Activated B cell treated with CpG ODN at 0.5 μM for 24 hours (primary cell): ENCODE measurements at regions of chr4 and their contacts with region 1.

Region 1: DNA sequence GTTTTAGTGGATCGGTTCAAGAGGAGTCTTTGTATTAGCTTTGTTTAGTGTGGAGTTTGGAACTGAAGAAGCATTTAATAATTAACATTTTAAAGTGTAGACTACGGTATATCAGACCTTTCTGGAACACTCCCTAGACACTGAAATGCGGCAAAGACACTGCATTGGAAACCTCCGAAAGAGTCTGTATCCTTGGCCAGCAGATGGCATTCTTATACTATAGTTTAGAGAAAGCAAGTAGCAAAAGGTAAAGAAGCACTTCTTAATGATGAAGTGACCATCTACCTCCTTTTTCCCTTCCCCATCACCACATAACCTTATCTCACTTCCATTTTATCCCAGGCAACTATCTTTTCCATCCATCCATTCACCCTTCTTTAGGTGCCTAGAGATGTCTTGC is 7.6 kb downstream of the FABP2 start:
- DNase-seq: no peak
- ATAC-seq: peak; percentile 57
- H3K4me3 Mint-ChIP-seq: no peak overlapping the region
- H3K27ac Mint-ChIP-seq: no peak overlapping the region
- H3K4me1 Mint-ChIP-seq: no peaks in the 10 kb centered on the region
- H3K27me3 Mint-ChIP-seq: peaks cover 8% of the 10 kb centered on the region
- CTCF ChIP-seq: no peak

Region 2: DNA sequence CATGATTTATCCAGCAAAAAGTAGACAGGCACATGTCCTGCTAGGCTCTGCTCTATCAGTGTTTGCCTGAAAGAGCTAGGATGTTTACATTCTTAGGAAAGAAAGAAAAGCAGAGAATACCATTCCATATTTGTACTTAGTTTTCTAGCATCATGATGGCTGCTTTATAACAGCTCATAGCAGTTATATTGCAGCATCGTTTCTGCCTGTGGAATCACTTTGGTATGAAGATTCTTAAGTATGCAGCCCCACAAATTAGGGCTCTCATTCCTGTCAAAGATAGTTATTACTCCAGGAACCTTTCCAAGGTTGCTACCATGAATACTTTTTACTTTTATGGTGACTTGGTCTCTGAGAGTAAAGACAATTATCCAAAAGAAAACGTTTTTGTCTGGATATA is 297.7 kb before region 1 on chr4:
- CTCF ChIA-PET with region 1: no interaction called
- POLR2A ChIA-PET with region 1: no interaction called
- intact Hi-C with region 1: no loop called
- DNase-seq: no peak
- ATAC-seq: no peak
- H3K4me3 Mint-ChIP-seq: no peak overlapping the region
- H3K27ac Mint-ChIP-seq: no peak overlapping the region
- H3K4me1 Mint-ChIP-seq: no peaks in the 10 kb centered on the region
- H3K27me3 Mint-ChIP-seq: peaks cover 24% of the 10 kb centered on the region
- CTCF ChIP-seq: no peak

Region 3: DNA sequence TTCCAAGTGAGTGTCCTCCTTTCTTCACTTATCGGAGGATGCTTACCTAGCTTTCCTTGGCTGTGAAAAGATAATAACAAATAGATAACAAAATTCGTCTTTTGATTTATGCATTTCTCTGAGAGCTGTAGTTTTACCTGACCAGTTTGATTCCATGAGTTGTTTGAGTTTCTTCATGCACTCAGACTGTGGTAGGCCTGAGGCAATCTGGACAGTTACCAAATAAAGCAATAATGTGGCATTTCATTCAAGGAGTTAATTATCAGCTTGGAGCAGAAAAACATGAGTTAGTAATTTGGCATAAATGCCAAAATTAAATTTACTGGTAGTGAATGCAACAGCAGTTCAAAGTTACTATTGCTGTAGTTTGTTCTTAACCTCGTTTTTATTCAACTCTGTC is 45.9 kb before region 1 on chr4:
- CTCF ChIA-PET with region 1: no interaction called
- POLR2A ChIA-PET with region 1: no interaction called
- intact Hi-C with region 1: no loop called
- DNase-seq: no peak
- ATAC-seq: no peak
- H3K4me3 Mint-ChIP-seq: no peak overlapping the region
- H3K27ac Mint-ChIP-seq: no peak overlapping the region
- H3K4me1 Mint-ChIP-seq: no peaks in the 10 kb centered on the region
- H3K27me3 Mint-ChIP-seq: no peaks in the 10 kb centered on the region
- CTCF ChIP-seq: no peak

Region 4: DNA sequence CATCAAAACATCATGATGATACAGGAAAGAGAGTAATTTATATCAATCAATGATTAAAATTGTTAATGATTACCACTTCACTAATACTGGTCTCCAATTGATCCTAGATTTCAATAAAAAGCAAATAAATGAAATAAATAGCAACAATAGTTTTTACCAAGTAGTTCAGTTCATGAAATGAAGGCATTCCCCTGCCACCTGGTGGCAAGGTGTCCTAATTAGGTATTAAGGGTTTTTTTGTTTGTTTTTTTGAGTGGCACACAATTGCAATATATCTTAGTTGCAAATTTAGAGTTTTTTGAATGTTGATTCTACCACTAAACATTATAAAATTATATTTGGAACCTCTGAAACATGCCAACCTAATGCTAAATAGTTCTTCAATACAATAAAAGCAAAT is 471.6 kb after region 1 on chr4:
- CTCF ChIA-PET with region 1: no interaction called
- POLR2A ChIA-PET with region 1: no interaction called
- intact Hi-C with region 1: loop called (anchors 2 kb)
- DNase-seq: no peak
- ATAC-seq: no peak
- H3K4me3 Mint-ChIP-seq: no peak overlapping the region
- H3K27ac Mint-ChIP-seq: no peak overlapping the region
- H3K4me1 Mint-ChIP-seq: no peaks in the 10 kb centered on the region
- H3K27me3 Mint-ChIP-seq: no peaks in the 10 kb centered on the region
- CTCF ChIP-seq: no peak

Region 5: GRCh38 chr4:119825696-119826095 is 511.3 kb after region 1 on chr4:
- CTCF ChIA-PET with region 1: no interaction called
- POLR2A ChIA-PET with region 1: no interaction called
- intact Hi-C with region 1: no loop called
- DNase-seq: no peak
- ATAC-seq: no peak
- H3K4me3 Mint-ChIP-seq: no peak overlapping the region
- H3K27ac Mint-ChIP-seq: no peak overlapping the region
- H3K4me1 Mint-ChIP-seq: no peaks in the 10 kb centered on the region
- H3K27me3 Mint-ChIP-seq: no peaks in the 10 kb centered on the region
- CTCF ChIP-seq: no peak